ENCODE measurements at regions of chr5 and their contacts with region 1.

Region 1: GRCh38 chr5:62448528-62448927 is 36.0 kb downstream of the IPO11 start:
- H3K4me3 Mint-ChIP-seq: no peak overlapping the region
- H3K27ac Mint-ChIP-seq: no peak overlapping the region
- H3K4me1 Mint-ChIP-seq: no peaks in the 10 kb centered on the region
- H3K27me3 Mint-ChIP-seq: no peaks in the 10 kb centered on the region

Region 2: DNA sequence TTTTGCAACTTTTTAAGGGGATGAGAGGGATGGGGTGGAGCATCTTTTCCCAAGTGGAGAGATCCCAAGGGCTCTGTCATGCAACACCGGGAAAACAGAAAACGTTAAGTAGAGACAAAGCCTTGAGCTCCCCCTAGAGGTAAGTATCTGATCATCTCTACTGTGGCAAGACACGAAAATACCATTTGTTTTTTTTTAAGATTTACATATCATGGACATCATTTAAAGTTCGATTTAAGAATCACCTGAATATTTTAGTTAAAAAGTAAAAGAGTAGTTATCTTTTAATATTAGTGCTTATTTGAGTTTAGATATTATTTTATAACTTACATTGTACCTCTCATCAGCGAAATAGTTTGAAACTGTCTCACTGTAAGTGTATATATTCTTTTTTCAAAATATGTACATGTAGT is 330.5 kb after region 1 on chr5:
- intact Hi-C with region 1: loop called (anchors 5 kb)
- H3K4me3 Mint-ChIP-seq: no peak overlapping the region
- H3K27ac Mint-ChIP-seq: no peak overlapping the region
- H3K4me1 Mint-ChIP-seq: peaks cover 7% of the 10 kb centered on the region
- H3K27me3 Mint-ChIP-seq: no peaks in the 10 kb centered on the region

Region 3: DNA sequence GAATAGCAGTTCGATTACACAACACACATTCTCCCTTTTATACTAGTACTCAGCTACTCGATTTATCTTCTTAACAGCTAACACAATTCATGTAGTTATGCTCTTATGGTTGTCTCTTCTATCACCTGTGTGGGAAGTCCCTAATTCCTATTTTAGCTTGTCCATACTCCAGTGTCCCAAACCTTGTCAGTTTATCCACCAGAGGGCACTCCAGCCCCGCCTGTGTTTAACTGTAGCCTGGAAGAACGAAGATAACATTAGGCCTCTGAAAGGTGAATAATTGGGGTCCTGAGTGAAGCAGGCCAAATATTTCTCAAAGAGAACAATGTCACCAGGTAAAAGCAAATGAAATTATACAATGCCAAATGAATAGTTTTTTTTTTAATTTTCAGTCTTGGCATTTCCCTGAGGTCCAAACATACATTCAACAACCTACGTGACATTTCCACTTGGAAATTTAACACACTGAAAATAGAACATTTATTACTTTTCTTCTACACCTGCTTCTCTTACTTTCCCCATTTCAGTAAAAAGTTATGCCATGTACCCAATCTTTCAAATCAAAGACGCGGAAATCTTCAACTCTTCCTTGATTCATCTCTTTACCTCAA is 953.0 kb after region 1 on chr5:
- intact Hi-C with region 1: loop called (anchors 5 kb)
- H3K4me3 Mint-ChIP-seq: no peak overlapping the region
- H3K27ac Mint-ChIP-seq: no peak overlapping the region
- H3K4me1 Mint-ChIP-seq: no peaks in the 10 kb centered on the region
- H3K27me3 Mint-ChIP-seq: no peaks in the 10 kb centered on the region

Region 4: GRCh38 chr5:63963080-63963735 is 1514.7 kb after region 1 on chr5:
- intact Hi-C with region 1: loop called (anchors 10 kb)
- H3K4me3 Mint-ChIP-seq: no peak overlapping the region
- H3K27ac Mint-ChIP-seq: no peak overlapping the region
- H3K4me1 Mint-ChIP-seq: no peaks in the 10 kb centered on the region
- H3K27me3 Mint-ChIP-seq: peaks cover 41% of the 10 kb centered on the region

Measured in dendritic cell treated with granulocyte-macrophage colony-stimulating factor and Interleukin-4, amounts not matched to agents 40 ng/mL and 50 ng/mL, for 4 days (primary cell).